ENCODE measurements at regions of chr5 and their contacts with region 1.

Region 1: DNA sequence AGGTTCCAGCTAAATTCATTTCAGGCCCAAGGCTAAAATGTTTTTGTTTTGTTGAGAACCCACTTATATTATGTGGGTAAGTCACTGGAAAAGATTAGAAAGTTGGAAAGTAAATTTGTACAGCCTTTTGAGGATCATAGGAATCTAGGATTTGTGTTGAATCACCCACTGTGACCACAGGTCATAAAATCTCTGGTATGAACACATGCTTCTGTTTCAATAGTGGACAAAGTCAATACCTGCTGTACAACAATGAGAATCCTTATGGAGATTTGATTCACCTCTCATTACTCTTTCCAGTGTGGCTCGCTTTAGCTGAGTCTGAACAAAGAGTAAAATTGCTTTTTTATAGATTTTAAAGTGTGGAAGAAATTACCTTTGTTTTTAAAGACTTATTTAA is 369.5 kb downstream of the TMEM167A start:
- DNase-seq: peak in 1 of 2 experiments; percentile 39
- H3K4me3 ChIP-seq: no peak overlapping the region
- H3K4me3 Mint-ChIP-seq: no peak overlapping the region
- H3K27ac Mint-ChIP-seq: peak overlapping the region; percentile 4
- H3K4me1 ChIP-seq: peaks cover 22% of the 10 kb centered on the region
- H3K4me1 Mint-ChIP-seq: peaks cover 20% of the 10 kb centered on the region
- H3K27me3 ChIP-seq: no peaks in the 10 kb centered on the region
- H3K27me3 Mint-ChIP-seq: no peaks in the 10 kb centered on the region
- CTCF ChIP-seq: no peak

Region 2: DNA sequence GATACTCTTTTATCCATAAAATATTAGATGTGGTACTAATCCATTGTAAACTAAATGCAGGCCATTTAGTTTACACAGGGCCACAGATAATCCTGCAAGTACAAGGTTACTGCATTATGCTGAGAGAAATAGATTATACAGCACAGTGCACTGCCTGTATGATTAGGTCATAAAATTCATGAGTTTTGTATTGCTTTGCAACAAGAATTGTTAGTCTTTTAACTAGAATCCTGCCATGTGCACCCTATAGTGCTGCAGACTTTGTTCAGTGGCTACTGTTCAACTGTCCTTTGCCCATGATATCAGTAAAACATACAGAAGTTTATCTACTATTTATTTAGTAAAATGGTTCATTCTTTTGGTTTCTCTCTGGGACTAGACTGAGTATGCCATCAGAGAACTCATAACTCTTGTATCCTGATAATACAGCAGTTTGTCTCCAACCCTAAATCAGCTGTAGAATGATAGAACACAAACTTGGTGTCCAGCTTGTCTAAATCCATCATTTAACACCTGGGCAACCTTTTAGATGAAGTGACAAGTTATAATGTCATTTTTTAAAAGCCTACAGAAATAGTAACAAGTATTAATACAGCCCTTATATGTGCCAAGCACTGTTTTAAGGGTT is 78.3 kb after region 1 on chr5:
- CTCF ChIA-PET with region 1: no interaction called
- POLR2A ChIA-PET with region 1: no interaction called
- intact Hi-C with region 1: loop called (anchors 5 kb)
- DNase-seq: peak in 1 of 2 experiments; percentile 24
- H3K4me3 ChIP-seq: no peak overlapping the region
- H3K4me3 Mint-ChIP-seq: no peak overlapping the region
- H3K27ac Mint-ChIP-seq: no peak overlapping the region
- H3K4me1 ChIP-seq: peaks cover 23% of the 10 kb centered on the region
- H3K4me1 Mint-ChIP-seq: no peaks in the 10 kb centered on the region
- H3K27me3 ChIP-seq: no peaks in the 10 kb centered on the region
- H3K27me3 Mint-ChIP-seq: no peaks in the 10 kb centered on the region
- CTCF ChIP-seq: no peak

Region 3: DNA sequence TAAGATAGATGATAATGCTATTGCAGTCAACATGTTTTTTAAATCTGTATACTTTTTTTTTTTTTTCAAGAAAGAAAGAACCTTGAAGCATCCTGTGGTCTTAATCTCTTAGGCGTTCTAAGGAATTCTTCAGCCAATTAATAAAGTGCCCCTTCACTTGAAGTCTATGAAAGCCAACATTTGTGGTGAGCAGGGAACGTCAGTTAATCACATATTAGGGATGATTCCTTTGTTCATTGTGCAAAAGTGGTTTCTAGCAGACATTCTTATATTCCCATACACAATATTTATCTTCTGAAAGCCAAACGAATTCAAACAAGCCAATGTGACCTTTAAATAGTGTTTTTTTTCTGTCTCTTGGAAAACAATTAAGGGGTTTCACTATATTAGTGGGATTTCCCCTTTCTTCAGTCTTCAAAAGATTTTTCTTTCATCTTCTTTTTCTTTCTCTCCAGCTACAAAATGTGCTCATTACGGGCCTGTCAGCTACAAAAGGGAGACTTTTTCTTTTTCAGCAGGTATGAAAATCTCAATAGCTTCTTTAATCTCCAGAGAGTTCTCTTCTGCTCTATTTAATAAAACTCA is 329.3 kb after region 1 on chr5:
- CTCF ChIA-PET with region 1: no interaction called
- POLR2A ChIA-PET with region 1: no interaction called
- intact Hi-C with region 1: no loop called
- DNase-seq: no peak
- H3K4me3 ChIP-seq: no peak overlapping the region
- H3K4me3 Mint-ChIP-seq: no peak overlapping the region
- H3K27ac Mint-ChIP-seq: no peak overlapping the region
- H3K4me1 ChIP-seq: no peaks in the 10 kb centered on the region
- H3K4me1 Mint-ChIP-seq: no peaks in the 10 kb centered on the region
- H3K27me3 ChIP-seq: no peaks in the 10 kb centered on the region
- H3K27me3 Mint-ChIP-seq: no peaks in the 10 kb centered on the region
- CTCF ChIP-seq: no peak

Measured in Caco-2 (cell line).